Activated CD4-positive, alpha-beta T cell treated with anti-CD3 and anti-CD28 coated beads, Interleukin-2, amount 10 ng/mL, durations not matched to agents 24 days and 14 days (primary cell): ENCODE measurements at regions of chr4 and their contacts with region 1.

Region 1: DNA sequence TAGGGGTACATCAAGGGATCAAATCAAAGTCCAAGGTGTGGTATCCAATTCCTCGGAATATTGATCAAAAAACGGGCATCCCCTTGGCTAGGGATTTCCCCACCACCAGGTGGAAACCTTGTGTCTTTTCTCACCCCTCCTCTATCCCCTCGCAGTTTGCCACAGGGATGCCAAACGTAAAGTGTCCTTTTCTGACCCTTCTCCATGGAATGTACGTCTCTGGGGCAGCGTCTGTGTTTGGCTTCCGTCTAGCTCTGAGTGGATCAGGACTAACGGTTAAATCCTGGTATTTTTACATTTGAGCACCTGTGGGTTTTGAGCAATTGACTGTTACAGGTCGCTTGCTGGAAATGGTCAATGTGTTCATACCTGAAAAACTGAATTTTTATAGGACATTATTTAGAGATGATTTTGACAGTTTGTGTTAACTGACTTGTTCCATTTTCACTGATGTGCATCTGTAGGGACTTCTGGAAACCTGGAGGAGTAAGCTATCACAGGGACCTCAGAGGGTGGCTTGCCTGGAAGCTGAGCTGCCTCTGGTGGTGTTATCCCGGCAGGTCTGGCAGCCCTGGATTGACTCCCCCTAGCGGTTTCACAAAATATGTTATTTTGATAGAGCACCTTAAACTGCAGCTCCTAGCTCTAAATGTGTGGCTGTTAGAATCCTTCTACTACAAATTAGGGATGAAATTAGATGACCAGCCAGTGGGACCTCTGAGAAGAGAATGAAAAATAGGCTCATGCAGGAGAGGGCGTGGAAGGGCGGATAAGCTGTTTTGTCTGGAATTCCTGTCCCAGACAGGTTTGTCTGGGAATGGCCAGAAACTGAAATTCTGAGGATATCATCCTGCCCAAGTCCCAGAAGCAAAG is 8.8 kb upstream of the MGST2 start:
- DNase-seq: peak; percentile 84
- H3K4me3 Mint-ChIP-seq: peak overlapping the region; percentile 75
- H3K27ac Mint-ChIP-seq: peak overlapping the region; percentile 98
- H3K4me1 Mint-ChIP-seq: peaks cover 32% of the 10 kb centered on the region
- H3K27me3 Mint-ChIP-seq: peaks cover 5% of the 10 kb centered on the region

Region 2: DNA sequence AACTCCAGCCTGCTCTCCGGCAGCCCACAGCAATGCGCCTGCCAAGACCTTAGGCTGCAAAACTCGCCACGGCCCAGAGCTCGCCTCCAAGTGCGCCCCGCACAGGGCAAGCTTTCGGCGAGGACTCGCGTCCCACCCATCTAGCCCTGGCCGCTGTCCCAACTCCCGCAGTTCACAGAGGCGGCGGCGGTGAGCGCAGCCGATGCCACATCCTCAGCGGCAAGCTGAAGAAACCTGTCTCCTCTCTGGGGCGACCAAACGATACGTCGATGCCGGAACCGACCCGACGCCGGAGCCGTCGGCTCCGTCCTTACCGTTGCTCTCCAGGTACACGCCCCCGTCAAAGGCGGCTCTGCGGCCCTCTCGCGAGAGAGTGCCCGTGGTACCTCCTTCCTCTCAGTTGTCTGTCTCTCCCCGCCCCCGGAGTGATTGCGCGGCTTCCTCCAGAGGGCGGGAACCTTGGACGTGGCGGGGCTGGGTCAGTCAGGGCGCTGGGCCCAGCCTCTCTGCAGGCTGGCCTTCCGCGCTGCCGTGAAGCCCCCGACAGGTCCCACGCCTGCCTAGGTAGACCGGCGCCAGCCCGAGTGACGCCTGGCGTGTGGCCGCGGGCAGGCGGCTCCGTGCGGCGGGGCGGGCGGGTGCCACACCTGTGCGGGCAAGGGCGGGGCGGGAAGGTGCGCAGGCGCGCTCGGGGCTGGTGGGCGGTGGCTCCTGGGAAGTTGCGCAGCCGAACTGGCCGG is 203.3 kb before region 1 on chr4:
- intact Hi-C with region 1: loop called (anchors 1 kb)
- DNase-seq: peak; percentile 99
- H3K4me3 Mint-ChIP-seq: peak overlapping the region; percentile 92
- H3K27ac Mint-ChIP-seq: peak overlapping the region; percentile 96
- H3K4me1 Mint-ChIP-seq: peaks cover 49% of the 10 kb centered on the region
- H3K27me3 Mint-ChIP-seq: no peaks in the 10 kb centered on the region

Region 3: GRCh38 chr4:139606600-139607501 is 50.0 kb before region 1 on chr4:
- intact Hi-C with region 1: no loop called
- DNase-seq: no peak
- H3K4me3 Mint-ChIP-seq: peak overlapping the region; percentile 74
- H3K27ac Mint-ChIP-seq: no peak overlapping the region
- H3K4me1 Mint-ChIP-seq: peaks cover 15% of the 10 kb centered on the region
- H3K27me3 Mint-ChIP-seq: peaks cover 8% of the 10 kb centered on the region

Region 4: GRCh38 chr4:139734875-139735380 is 78.1 kb after region 1 on chr4:
- intact Hi-C with region 1: loop called (anchors 2 kb)
- DNase-seq: peak; percentile 86
- H3K4me3 Mint-ChIP-seq: peak overlapping the region; percentile 76
- H3K27ac Mint-ChIP-seq: peak overlapping the region; percentile 43
- H3K4me1 Mint-ChIP-seq: peaks cover 7% of the 10 kb centered on the region
- H3K27me3 Mint-ChIP-seq: peaks cover 53% of the 10 kb centered on the region

Region 5: DNA sequence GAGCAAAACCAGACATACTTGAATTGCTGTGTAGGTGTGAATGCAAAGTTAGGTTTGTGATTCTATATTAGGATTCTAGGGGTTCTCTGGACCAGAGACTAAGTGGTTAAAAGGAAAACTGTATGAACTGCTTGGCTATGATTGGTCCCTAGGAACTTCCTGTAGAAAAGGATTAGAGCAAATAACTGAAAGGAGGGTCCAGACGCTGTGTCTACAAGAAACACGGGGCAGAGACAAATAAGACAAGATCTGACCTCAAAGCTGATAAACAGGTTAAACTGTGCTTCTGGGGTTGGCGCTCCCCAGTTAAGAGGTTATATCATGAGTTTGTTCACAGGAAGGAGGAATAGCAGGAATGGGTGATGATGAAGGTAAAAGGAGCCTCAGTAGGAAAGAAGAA is 192.4 kb after region 1 on chr4:
- intact Hi-C with region 1: no loop called
- DNase-seq: no peak
- H3K4me3 Mint-ChIP-seq: no peak overlapping the region
- H3K27ac Mint-ChIP-seq: no peak overlapping the region
- H3K4me1 Mint-ChIP-seq: peaks cover 3% of the 10 kb centered on the region
- H3K27me3 Mint-ChIP-seq: peaks cover 27% of the 10 kb centered on the region

Region 6: DNA sequence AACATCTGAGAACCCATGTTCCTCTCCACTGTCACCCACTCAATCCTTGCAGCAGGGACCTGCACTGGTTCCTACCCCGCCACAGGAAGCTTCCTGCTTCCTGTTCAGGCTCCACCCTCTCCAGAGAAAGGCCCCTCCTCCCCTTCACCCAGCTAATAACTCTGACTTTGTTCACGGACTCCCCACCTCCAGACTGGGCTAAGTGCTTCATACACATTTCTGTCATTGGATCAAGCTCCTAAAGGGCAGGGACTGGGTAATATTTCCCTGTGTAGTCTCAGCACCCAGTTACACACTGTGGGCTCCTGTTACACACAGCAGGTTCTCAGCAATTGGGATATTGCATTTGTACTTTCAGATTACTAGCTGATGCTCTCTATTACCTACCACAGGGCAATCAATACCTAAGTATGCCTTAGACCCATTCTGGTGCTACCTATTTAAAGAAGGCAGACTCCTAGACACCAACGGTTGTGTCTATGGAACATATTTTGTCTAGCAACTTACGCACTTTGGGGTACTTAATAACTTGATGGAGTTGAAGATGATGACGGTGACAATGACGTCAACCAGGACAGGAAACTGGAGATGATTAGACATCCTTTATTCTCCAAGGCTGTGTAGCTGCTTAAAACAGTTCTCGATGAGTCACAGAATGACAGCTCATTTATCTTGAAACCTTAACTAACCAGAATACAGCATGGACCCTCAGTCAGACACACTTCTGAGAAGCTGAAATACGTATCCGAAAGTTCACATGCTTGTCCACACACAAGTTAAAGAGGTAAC is 439.0 kb after region 1 on chr4:
- intact Hi-C with region 1: loop called (anchors 5 kb)
- DNase-seq: peak; percentile 88
- H3K4me3 Mint-ChIP-seq: peak overlapping the region; percentile 86
- H3K27ac Mint-ChIP-seq: peak overlapping the region; percentile 94
- H3K4me1 Mint-ChIP-seq: peaks cover 72% of the 10 kb centered on the region
- H3K27me3 Mint-ChIP-seq: peaks cover 4% of the 10 kb centered on the region

Region 7: DNA sequence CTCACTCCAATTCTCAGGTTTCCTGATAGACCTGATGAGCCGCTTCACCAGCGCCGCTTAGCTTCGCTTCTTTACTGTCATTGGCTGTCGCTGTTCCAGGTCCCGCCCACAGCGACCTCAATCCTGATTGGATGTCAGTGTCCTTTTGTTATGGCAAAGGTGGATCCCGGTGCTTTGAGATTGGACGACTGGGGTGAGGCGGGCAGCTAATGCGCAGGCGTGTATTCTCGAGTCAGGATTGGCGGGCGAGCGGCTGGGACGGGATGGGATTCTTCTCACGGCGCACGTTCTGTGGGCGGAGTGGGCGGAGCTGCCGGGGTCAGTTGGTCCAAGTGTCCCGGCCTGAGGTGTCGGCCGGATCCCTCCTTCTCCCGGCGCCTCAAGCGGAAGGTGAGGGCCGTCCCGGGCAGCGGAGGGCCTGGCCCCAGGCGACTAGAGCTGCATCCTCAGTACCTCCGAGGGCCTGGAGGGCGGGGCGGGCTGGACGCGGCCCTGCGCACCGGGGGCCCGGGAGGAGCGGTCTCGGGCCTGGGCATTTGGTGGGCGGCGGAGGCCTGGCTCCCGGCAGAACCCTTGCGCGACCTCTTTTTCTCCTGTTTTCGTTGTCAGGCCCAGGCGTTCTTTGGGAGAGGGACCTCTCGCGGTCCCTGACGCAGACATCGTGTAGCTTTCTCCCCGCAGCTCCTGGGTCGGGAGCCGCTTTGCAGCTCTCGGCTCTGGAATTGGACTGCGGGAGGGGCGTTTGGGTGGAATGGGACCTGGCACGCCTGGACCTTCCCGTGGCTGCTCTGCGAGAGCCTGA is 716.7 kb after region 1 on chr4 and contains the start of gene SCOC:
- intact Hi-C with region 1: loop called (anchors 5 kb)
- DNase-seq: peak; percentile 99
- H3K4me3 Mint-ChIP-seq: no peak within 1 kb of the TSS
- H3K27ac Mint-ChIP-seq: peak within 1 kb of the TSS; percentile 65
- H3K4me1 Mint-ChIP-seq: peaks cover 24% of the 10 kb centered on the region
- H3K27me3 Mint-ChIP-seq: no peaks in the 10 kb centered on the region
- total RNA-seq, gene SCOC: 33.7 and 33.8 TPM in 2 replicates